ENCODE measurements at regions of chr12 and their contacts with region 1.

Region 1: GRCh38 chr12:123457980-123458783 is at the start of gene SNRNP35:
- DNase-seq: peak; percentile 75 to 94 (median 84)
- ATAC-seq: peak; percentile 78
- H3K4me3 ChIP-seq: peak within 1 kb of the TSS; percentile 96 to 99
- H3K4me3 Mint-ChIP-seq: peak within 1 kb of the TSS; percentile 99
- H3K27ac ChIP-seq: peak within 1 kb of the TSS; percentile 97 to 99
- H3K27ac Mint-ChIP-seq: peak within 1 kb of the TSS; percentile 100
- H3K4me1 ChIP-seq: peaks cover 13% of the 10 kb centered on the region
- H3K4me1 Mint-ChIP-seq: peaks cover 31% of the 10 kb centered on the region
- H3K27me3 ChIP-seq: no peaks in the 10 kb centered on the region
- H3K27me3 Mint-ChIP-seq: no peaks in the 10 kb centered on the region
- CTCF ChIP-seq: no peak
- total RNA-seq, gene SNRNP35: 24.9 to 27.4 TPM

Region 2: GRCh38 chr12:122500685-122501488 is 957.3 kb before region 1 on chr12 and contains the start of gene ZCCHC8:
- CTCF ChIA-PET with region 1: no interaction called
- POLR2A ChIA-PET with region 1: no interaction called
- intact Hi-C with region 1: loop called in 1 of 2 experiments (anchors 10 kb)
- DNase-seq: peak; percentile 92 to 98 (median 96)
- ATAC-seq: peak; percentile 92
- H3K4me3 ChIP-seq: peak within 1 kb of the TSS; percentile 74 to 80
- H3K4me3 Mint-ChIP-seq: peak within 1 kb of the TSS; percentile 97
- H3K27ac ChIP-seq: peak within 1 kb of the TSS; percentile 90 to 92
- H3K27ac Mint-ChIP-seq: peak within 1 kb of the TSS; percentile 99
- H3K4me1 ChIP-seq: peaks cover 17% of the 10 kb centered on the region
- H3K4me1 Mint-ChIP-seq: peaks cover 40% of the 10 kb centered on the region
- H3K27me3 ChIP-seq: no peaks in the 10 kb centered on the region
- H3K27me3 Mint-ChIP-seq: no peaks in the 10 kb centered on the region
- CTCF ChIP-seq: no peak
- total RNA-seq, gene ZCCHC8: 53.4 to 55.6 TPM

Region 3: GRCh38 chr12:123388177-123388947 is 69.8 kb before region 1 on chr12:
- CTCF ChIA-PET with region 1: no interaction called
- POLR2A ChIA-PET with region 1: interaction called, 13 read pairs
- intact Hi-C with region 1: loop called (anchors 1 to 2 kb)
- DNase-seq: peak; percentile 41 to 88 (median 72)
- ATAC-seq: peak; percentile 66
- H3K4me3 ChIP-seq: peak overlapping the region; percentile 42 to 64
- H3K4me3 Mint-ChIP-seq: peak overlapping the region; percentile 88
- H3K27ac ChIP-seq: peak overlapping the region; percentile 33 to 79
- H3K27ac Mint-ChIP-seq: peak overlapping the region; percentile 91
- H3K4me1 ChIP-seq: peaks cover 22% of the 10 kb centered on the region
- H3K4me1 Mint-ChIP-seq: peaks cover 32% of the 10 kb centered on the region
- H3K27me3 ChIP-seq: no peaks in the 10 kb centered on the region
- H3K27me3 Mint-ChIP-seq: no peaks in the 10 kb centered on the region
- CTCF ChIP-seq: no peak

Region 4: GRCh38 chr12:123421314-123421713 is 36.9 kb before region 1 on chr12:
- CTCF ChIA-PET with region 1: no interaction called
- POLR2A ChIA-PET with region 1: no interaction called
- intact Hi-C with region 1: no loop called
- DNase-seq: no peak
- ATAC-seq: no peak
- H3K4me3 ChIP-seq: no peak overlapping the region
- H3K4me3 Mint-ChIP-seq: no peak overlapping the region
- H3K27ac ChIP-seq: no peak overlapping the region
- H3K27ac Mint-ChIP-seq: no peak overlapping the region
- H3K4me1 ChIP-seq: no peaks in the 10 kb centered on the region
- H3K4me1 Mint-ChIP-seq: no peaks in the 10 kb centered on the region
- H3K27me3 ChIP-seq: no peaks in the 10 kb centered on the region
- H3K27me3 Mint-ChIP-seq: no peaks in the 10 kb centered on the region
- CTCF ChIP-seq: no peak

Region 5: GRCh38 chr12:123445388-123446351 is 12.5 kb before region 1 on chr12:
- CTCF ChIA-PET with region 1: interaction called, 3 read pairs
- POLR2A ChIA-PET with region 1: interaction called, 20 read pairs
- intact Hi-C with region 1: loop called in 1 of 2 experiments (anchors 1 kb)
- DNase-seq: no peak
- ATAC-seq: no peak
- H3K4me3 ChIP-seq: no peak overlapping the region
- H3K4me3 Mint-ChIP-seq: no peak overlapping the region
- H3K27ac ChIP-seq: no peak overlapping the region
- H3K27ac Mint-ChIP-seq: peak overlapping the region; percentile 45
- H3K4me1 ChIP-seq: peaks cover 4% of the 10 kb centered on the region
- H3K4me1 Mint-ChIP-seq: peaks cover 18% of the 10 kb centered on the region
- H3K27me3 ChIP-seq: no peaks in the 10 kb centered on the region
- H3K27me3 Mint-ChIP-seq: no peaks in the 10 kb centered on the region
- CTCF ChIP-seq: no peak

Region 6: GRCh38 chr12:123533672-123534643 is 75.8 kb after region 1 on chr12 and contains the start of gene RILPL1:
- CTCF ChIA-PET with region 1: interaction called, 3 read pairs
- POLR2A ChIA-PET with region 1: interaction called, 4 read pairs
- intact Hi-C with region 1: loop called in 1 of 2 experiments (anchors 5 kb)
- DNase-seq: peak; percentile 7 to 71 (median 43)
- ATAC-seq: peak; percentile 82
- H3K4me3 ChIP-seq: peak within 1 kb of the TSS; percentile 61 to 68
- H3K4me3 Mint-ChIP-seq: peak within 1 kb of the TSS; percentile 89
- H3K27ac ChIP-seq: no peak within 1 kb of the TSS
- H3K27ac Mint-ChIP-seq: peak within 1 kb of the TSS; percentile 74
- H3K4me1 ChIP-seq: peaks cover 19% of the 10 kb centered on the region
- H3K4me1 Mint-ChIP-seq: peaks cover 17% of the 10 kb centered on the region
- H3K27me3 ChIP-seq: no peaks in the 10 kb centered on the region
- H3K27me3 Mint-ChIP-seq: no peaks in the 10 kb centered on the region
- CTCF ChIP-seq: peak; percentile 27
- total RNA-seq, gene RILPL1: 3.1 to 3.4 TPM

Region 7: GRCh38 chr12:123633379-123634141 is 175.4 kb after region 1 on chr12 and contains the starts of genes EIF2B1 and GTF2H3:
- CTCF ChIA-PET with region 1: no interaction called
- POLR2A ChIA-PET with region 1: no interaction called
- intact Hi-C with region 1: loop called in 1 of 2 experiments (anchors 1 kb)
- DNase-seq: peak; percentile 88 to 99 (median 97)
- ATAC-seq: peak; percentile 94
- H3K4me3 ChIP-seq: peak within 1 kb of the TSS; percentile 77 to 79
- H3K4me3 Mint-ChIP-seq: peak within 1 kb of the TSS; percentile 92
- H3K27ac ChIP-seq: peak within 1 kb of the TSS; percentile 90 to 93
- H3K27ac Mint-ChIP-seq: peak within 1 kb of the TSS; percentile 98
- H3K4me1 ChIP-seq: peaks cover 21% of the 10 kb centered on the region
- H3K4me1 Mint-ChIP-seq: peaks cover 42% of the 10 kb centered on the region
- H3K27me3 ChIP-seq: no peaks in the 10 kb centered on the region
- H3K27me3 Mint-ChIP-seq: no peaks in the 10 kb centered on the region
- CTCF ChIP-seq: no peak
- total RNA-seq, gene EIF2B1: 35.9 to 40.0 TPM
- total RNA-seq, gene GTF2H3: 11.8 to 15.2 TPM